ENCODE measurements at regions of chrX and their contacts with region 1.

Region 1: DNA sequence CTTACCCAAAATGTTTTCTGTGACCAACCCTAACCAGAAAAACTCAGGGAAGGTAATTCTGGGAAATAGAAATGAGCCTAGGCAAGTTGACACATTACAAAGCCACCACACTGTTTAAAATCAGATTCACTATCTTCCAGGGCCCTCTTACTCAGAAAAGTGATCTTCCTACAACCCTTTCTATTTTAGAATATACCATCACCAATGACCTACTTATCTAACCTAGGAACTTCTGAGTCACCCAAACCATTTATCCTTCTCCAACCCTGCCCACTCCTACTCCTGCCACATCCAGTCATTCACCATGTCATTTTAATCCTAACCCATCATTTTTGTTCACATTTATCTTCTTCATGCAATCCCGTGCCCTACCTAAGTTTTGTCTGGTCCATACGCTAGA is 89.9 kb downstream of the FTHL17 start:
- DNase-seq: no peak
- H3K4me3 Mint-ChIP-seq: no peak overlapping the region
- H3K27ac Mint-ChIP-seq: peak overlapping the region; percentile 35
- H3K4me1 Mint-ChIP-seq: peaks cover 8% of the 10 kb centered on the region
- H3K27me3 Mint-ChIP-seq: peaks cover 4% of the 10 kb centered on the region

Region 2: DNA sequence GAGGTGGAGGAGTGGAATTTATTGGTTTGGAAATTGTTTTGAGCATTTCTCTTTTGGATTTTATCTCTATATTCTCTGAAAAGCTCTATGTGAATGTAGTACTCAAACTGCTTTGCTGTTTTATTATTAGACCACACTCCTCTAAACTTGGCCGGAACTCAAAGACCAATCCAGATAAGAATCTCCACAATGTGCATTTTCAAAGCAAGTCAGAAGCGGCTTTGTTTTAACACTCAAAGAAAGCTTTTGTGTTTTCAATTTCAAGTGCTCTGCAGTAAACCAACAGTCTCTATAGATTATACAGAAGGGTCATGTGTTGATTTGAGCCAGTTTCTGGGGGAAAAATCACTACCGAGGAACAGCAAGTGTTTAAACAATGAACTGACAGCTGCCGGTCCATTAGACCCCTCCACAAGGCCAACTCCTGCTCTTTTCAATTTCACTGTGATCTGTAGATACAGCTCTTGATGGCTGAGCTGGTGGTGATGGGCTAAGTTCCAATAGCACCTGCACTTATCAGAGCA is 10.5 kb after region 1 on chrX:
- intact Hi-C with region 1: loop called (anchors 1 kb)
- DNase-seq: no peak
- H3K4me3 Mint-ChIP-seq: no peak overlapping the region
- H3K27ac Mint-ChIP-seq: no peak overlapping the region
- H3K4me1 Mint-ChIP-seq: no peaks in the 10 kb centered on the region
- H3K27me3 Mint-ChIP-seq: no peaks in the 10 kb centered on the region

Measured in activated CD4-positive, alpha-beta T cell treated with anti-CD3 and anti-CD28 coated beads, Interleukin-2, amount 10 ng/mL, durations not matched to agents 24 days and 14 days (primary cell).